ENCODE measurements at regions of chr4 and their contacts with region 1.

Region 1: DNA sequence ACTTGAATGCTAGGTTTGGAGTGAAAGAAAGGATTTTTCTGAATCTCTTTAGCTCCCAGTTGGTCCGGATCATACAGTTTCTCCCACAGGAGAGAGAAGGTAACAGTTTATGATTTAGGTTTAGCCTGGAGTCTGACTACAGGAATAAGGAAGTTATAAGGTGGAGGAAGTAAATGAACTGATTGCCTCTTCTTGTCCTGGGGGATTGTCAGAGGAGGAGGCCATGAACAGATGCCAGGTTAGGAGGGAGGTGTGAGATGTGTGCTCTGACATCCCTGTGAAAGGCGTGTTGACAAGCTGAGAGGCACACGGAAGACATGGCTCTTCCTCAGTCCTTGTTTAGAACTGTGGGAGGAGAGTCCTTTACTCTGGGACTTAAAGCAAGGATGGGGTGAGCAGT is 64.4 kb downstream of the CHRNA9 start:
- DNase-seq: no peak
- H3K4me3 ChIP-seq: no peak overlapping the region
- H3K27ac ChIP-seq: no peak overlapping the region
- H3K4me1 ChIP-seq: peaks cover 0 to 13% (median 5%) of the 10 kb centered on the region in 4 experiments; a peak in 4 of 7 replicates
- H3K27me3 ChIP-seq: no peaks in the 10 kb centered on the region
- CTCF ChIP-seq: no peak
- EP300 ChIP-seq: no peak
- POLR2A ChIP-seq: no peak
- RAD21 ChIP-seq: no peak

Region 2: GRCh38 chr4:40350627-40351227 is 48.9 kb before region 1 on chr4:
- CTCF ChIA-PET with region 1: no interaction called
- POLR2A ChIA-PET with region 1: no interaction called
- DNase-seq: no peak
- H3K4me3 ChIP-seq: no peak overlapping the region
- H3K27ac ChIP-seq: no peak overlapping the region
- H3K4me1 ChIP-seq: no peaks in the 10 kb centered on the region; a peak in 1 of 7 replicates
- H3K27me3 ChIP-seq: no peaks in the 10 kb centered on the region
- CTCF ChIP-seq: no peak
- EP300 ChIP-seq: no peak
- POLR2A ChIP-seq: no peak
- RAD21 ChIP-seq: no peak

Region 3: DNA sequence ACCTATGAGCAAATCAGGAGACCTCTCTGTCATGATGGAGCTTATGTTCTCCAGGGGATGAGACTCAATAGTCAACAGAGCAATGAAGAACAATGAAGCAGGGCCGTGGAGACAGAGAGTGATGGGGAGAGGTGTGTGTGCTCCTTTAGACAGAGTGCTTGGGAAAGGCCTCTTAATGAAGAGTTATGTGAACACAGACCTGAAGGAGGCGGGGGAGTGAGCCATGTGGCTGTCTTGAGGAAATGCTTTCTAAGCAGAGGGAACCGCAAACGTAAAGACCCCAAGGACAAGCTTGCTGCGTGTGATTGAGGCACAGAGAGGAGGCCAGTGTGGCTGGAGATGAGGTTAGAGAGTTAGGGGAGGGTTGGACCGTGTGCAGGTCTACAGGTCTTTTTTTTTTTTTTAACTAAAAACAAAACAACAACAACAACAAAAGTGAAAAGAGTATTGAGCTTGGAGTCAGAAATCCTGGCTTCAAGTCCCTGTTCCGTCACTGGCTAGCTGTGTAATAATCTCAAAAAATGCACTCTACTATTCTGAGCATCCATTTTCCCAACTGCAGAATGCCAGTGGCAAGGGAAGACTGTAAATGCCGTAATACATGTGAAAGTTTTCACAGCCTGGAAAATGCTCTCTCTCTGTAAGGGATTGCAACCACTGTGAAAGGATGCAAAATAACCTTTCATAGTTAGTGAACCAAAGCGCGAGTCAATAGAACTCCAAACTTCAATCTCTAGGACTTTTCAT is 11.2 kb before region 1 on chr4:
- CTCF ChIA-PET with region 1: interaction called, 17 read pairs
- POLR2A ChIA-PET with region 1: interaction called, 4 read pairs
- DNase-seq: no peak
- H3K4me3 ChIP-seq: no peak overlapping the region
- H3K27ac ChIP-seq: no peak overlapping the region
- H3K4me1 ChIP-seq: no peaks in the 10 kb centered on the region
- H3K27me3 ChIP-seq: no peaks in the 10 kb centered on the region
- CTCF ChIP-seq: peak in 2 of 3 experiments; percentile 7 to 14; a peak in 2 of 4 replicates
- EP300 ChIP-seq: no peak
- POLR2A ChIP-seq: no peak
- RAD21 ChIP-seq: peak; percentile 21 to 35; a peak in 3 of 4 replicates